ENCODE measurements at regions of chr16 and their contacts with region 1.

Region 1: DNA sequence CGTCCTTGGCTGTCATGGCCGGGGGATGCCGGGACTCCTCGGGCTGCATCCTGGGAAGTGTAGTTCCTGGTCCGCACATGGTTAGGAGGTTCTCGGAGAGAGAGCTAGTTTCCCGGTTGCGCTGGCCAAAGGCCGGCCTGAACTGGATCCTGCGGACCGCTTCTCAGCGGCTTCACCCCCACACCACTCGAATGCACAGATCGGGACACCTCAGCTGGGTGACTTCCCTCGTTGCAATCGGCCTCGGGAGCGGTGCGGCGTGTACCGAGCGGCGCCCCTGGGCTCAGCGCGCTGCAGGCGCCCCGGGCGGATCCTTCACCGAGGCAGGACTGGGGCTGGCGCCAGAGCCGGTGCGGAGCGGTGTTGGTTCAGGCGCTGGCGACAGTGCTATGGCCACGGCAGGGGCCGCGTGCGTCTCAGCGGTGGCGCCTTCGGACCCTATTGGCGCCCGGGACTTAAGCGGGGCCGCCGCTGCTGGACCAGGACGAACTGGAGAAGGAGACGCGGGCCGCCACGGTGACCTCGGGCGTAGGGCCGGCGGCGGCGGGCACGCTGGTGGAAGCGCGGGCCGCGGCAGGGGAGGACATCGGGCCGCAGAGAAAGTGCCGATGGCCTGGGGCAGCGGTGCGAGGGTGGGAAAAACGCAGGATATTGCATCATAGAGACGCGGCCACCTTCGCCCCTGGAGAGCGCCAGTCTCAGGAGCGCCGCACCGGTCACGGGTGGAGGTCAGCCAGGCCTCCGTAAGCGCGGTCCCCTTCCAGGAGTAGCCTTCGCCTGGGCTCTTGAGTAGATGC is 11.4 kb downstream of the ZNF629 start:
- H3K4me3 ChIP-seq: peak overlapping the region; percentile 76
- H3K27ac ChIP-seq: peak overlapping the region; percentile 92
- H3K4me1 ChIP-seq: no peaks in the 10 kb centered on the region; the same call in 1 of the 2 replicates
- CTCF ChIP-seq: no peak; the same call in none of the 2 replicates

Region 2: GRCh38 chr16:30669896-30670797 is 105.4 kb before region 1 on chr16:
- CTCF ChIA-PET with region 1: no interaction called
- POLR2A ChIA-PET with region 1: no interaction called
- H3K4me3 ChIP-seq: no peak overlapping the region
- H3K27ac ChIP-seq: no peak overlapping the region
- H3K4me1 ChIP-seq: no peaks in the 10 kb centered on the region
- CTCF ChIP-seq: no peak

Region 3: DNA sequence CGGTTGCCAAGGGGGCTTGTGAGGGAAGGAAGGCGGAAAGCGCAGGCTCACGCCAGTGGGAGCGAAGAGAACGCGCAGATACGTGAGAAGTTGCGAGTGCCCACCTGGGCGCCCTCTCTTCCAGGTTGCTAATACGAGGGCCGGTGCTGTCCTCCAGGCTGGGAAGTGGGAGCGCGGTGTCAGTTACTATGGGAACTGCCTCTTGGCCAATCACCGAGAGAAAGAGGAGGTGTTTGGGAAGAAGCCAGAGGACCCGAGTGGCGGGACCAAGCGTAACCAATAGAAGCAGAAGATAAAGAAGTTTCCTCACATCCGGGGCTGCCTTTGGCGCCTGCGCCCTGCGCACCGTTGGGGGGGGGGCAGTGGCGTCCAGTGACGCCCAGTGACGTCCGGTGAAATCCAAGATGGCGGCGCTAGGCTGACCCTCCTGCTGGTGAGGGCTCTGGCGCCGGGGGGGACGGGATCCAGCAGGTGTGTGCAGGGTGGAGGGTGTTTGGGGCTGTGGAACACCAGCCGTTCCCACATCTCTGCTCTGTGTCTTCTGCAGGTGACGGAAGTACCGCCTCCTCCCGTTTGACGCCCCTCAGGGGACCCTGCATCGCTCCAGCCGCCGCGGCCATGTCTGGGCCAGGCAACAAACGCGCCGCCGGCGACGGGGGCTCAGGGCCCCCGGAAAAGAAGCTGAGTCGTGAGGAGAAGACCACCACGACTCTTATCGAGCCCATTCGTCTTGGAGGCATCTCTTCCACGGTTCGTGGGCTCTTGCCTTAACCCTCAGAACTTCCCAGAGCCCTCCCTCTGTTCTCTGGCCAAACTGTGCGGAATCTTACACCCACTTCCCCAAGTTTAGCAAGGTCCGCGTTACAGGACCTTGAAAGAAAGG is 13.4 kb before region 1 on chr16 and contains the starts of genes CFAP119 and RNF40:
- CTCF ChIA-PET with region 1: interaction called, 4 read pairs
- POLR2A ChIA-PET with region 1: interaction called, 23 read pairs
- H3K4me3 ChIP-seq: peak within 1 kb of the TSS; percentile 95
- H3K27ac ChIP-seq: peak within 1 kb of the TSS; percentile 83
- H3K4me1 ChIP-seq: peaks cover 4% of the 10 kb centered on the region; the same call in 1 of the 2 replicates
- CTCF ChIP-seq: peak; percentile 47; the same call in 1 of the 2 replicates

Region 4: GRCh38 chr16:30786936-30787612 is 11.5 kb after region 1 on chr16 and contains the start of gene ZNF629:
- CTCF ChIA-PET with region 1: no interaction called
- POLR2A ChIA-PET with region 1: interaction called, 13 read pairs
- H3K4me3 ChIP-seq: peak within 1 kb of the TSS; percentile 96
- H3K27ac ChIP-seq: peak within 1 kb of the TSS; percentile 83
- H3K4me1 ChIP-seq: peaks cover 3% of the 10 kb centered on the region; the same call in 1 of the 2 replicates
- CTCF ChIP-seq: peak; percentile 47; the same call in 1 of the 2 replicates

Region 5: DNA sequence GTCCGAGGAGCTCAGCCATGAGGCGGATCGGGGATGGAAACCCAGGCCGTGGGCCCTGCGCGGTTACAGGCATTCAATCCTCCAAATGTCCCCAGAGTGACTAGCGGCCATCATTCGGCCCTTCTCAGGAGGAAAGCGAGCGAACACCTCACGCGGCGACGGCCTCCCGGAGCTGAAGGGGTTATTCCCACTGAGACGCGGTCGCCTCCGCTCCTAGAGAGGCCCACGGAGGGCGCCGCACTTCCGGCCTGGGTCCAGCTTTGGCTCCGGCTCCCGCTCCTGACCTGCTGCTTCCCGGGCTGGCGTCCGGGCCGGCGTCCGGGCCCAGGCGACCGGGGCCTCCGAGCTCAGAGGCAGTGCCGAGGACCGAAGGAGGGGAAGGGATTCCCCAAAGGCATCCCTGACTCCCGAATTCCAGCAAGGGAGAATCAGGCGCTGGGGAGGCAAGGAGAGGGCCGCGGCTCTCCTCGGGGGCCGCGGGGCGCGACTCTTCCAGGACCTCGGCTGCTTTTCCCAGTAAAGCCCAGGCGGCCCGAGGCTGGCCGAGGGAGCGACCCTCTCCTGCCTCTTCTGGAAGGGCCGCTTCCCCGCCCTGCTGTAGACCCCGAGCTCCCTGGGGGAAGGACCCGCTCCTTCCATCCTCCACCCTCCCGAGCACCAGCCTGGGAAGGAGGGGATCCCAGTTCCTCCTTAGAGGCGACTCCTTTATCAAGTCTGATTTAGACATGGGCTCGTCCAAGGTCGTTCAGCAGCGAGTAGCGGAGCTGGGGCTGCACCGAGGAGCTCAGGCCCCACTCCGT is 30.0 kb after region 1 on chr16:
- CTCF ChIA-PET with region 1: interaction called, 3 read pairs
- POLR2A ChIA-PET with region 1: interaction called, 25 read pairs
- H3K4me3 ChIP-seq: peak overlapping the region; percentile 74
- H3K27ac ChIP-seq: peak overlapping the region; percentile 86
- H3K4me1 ChIP-seq: no peaks in the 10 kb centered on the region
- CTCF ChIP-seq: peak; percentile 79